BJ (cell line): ENCODE measurements at regions of chr4 and their contacts with region 1.

Region 1: DNA sequence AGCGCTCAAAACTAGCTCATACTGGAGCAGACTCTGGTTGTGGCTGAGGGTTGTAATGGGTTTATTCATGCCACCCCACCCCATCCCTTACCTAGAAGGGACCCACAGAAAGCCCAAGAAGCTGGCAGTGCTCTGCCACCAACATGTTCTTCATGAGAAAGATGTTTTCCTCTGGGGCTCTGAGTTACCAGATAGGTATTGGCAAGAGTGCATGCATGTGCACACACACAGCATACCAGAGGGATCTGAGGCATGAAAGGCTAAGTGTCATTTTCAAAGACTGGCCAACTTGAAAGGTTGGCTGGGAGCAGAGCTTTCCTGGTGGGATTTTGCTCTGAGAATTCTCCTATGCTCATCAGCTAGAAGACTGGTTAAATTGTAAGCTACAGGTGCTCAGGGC is 65.2 kb downstream of the PHOX2B start:
- DNase-seq: peak; percentile 8
- H3K4me3 ChIP-seq: no peak overlapping the region
- H3K27me3 ChIP-seq: no peaks in the 10 kb centered on the region
- CTCF ChIP-seq: no peak

Region 2: DNA sequence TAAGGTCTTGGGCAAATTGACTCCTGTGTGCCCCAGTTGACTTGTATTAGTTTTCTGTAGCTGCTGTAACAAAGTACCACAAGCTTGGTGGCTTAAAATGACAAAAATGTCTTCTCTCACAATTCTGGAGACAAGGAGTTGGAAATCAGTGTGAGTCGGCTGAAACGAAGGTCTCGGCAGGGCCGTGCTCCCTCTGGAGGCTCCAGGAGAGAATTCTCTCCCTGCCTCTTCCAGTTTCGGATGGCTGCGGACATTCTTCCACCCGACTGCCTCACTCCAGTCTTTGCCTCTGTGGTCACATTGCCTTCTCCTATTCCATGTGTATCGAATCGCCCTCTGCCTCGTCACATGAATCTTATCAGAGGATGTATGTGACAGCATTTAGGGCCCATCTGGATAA is 131.2 kb after region 1 on chr4:
- CTCF ChIA-PET with region 1: interaction called, 10 read pairs
- POLR2A ChIA-PET with region 1: no interaction called
- DNase-seq: no peak
- H3K4me3 ChIP-seq: no peak overlapping the region
- H3K27me3 ChIP-seq: peaks cover 4% of the 10 kb centered on the region
- CTCF ChIP-seq: peak; percentile 71

Region 3: GRCh38 chr4:41887821-41888686 is 204.7 kb after region 1 on chr4:
- CTCF ChIA-PET with region 1: interaction called, 17 read pairs
- POLR2A ChIA-PET with region 1: no interaction called
- DNase-seq: peak; percentile 1
- H3K4me3 ChIP-seq: no peak overlapping the region
- H3K27me3 ChIP-seq: peaks cover 24% of the 10 kb centered on the region
- CTCF ChIP-seq: peak; percentile 83